ENCODE measurements at regions of chr11 and their contacts with region 1.

Region 1: GRCh38 chr11:44950625-44951476 is at the start of gene TP53I11:
- DNase-seq: peak; percentile 89 to 94 (median 91)
- ATAC-seq: peak; percentile 69 to 91 (median 83)
- H3K4me3 ChIP-seq: peak within 1 kb of the TSS; percentile 47 to 97 (median 88)
- H3K27ac ChIP-seq: peak within 1 kb of the TSS; percentile 63 to 91 (median 84)
- H3K4me1 ChIP-seq: peaks cover 0 to 68% (median 44%) of the 10 kb centered on the region in 12 donors
- H3K27me3 ChIP-seq: no peaks in the 10 kb centered on the region
- CTCF ChIP-seq: peak; percentile 61 to 96 (median 90)
- POLR2A ChIP-seq: peak in 1 of 2 donors; percentile 92
- total RNA-seq, gene TP53I11: 24.0 to 75.0 (median 39.4) TPM

Region 2: GRCh38 chr11:44842220-44842619 is 108.6 kb before region 1 on chr11:
- intact Hi-C with region 1: no loop called
- DNase-seq: no peak
- ATAC-seq: no peak
- H3K4me3 ChIP-seq: no peak overlapping the region
- H3K27ac ChIP-seq: no peak overlapping the region
- H3K4me1 ChIP-seq: peaks cover 0 to 11% (median 0%) of the 10 kb centered on the region in 12 donors
- H3K27me3 ChIP-seq: no peaks in the 10 kb centered on the region
- CTCF ChIP-seq: no peak
- POLR2A ChIP-seq: no peak

Region 3: GRCh38 chr11:45025716-45026492 is 75.1 kb after region 1 on chr11:
- intact Hi-C with region 1: loop called in 5 of 10 experiments (anchors 5 kb)
- DNase-seq: peak; percentile 66 to 88 (median 87)
- ATAC-seq: peak; percentile 64 to 93 (median 70)
- H3K4me3 ChIP-seq: no peak overlapping the region
- H3K27ac ChIP-seq: peak overlapping the region in 10 of 12 donors; percentile 16 to 85 (median 68)
- H3K4me1 ChIP-seq: peaks cover 10 to 66% (median 38%) of the 10 kb centered on the region in 12 donors
- H3K27me3 ChIP-seq: no peaks in the 10 kb centered on the region
- CTCF ChIP-seq: no peak
- POLR2A ChIP-seq: no peak

Region 4: GRCh38 chr11:45045683-45046471 is 95.0 kb after region 1 on chr11:
- intact Hi-C with region 1: loop called in 1 of 10 experiments (anchors 5 kb)
- DNase-seq: peak in 4 of 5 donors; percentile 55 to 70 (median 58)
- ATAC-seq: peak in 3 of 4 donors; percentile 58 to 63 (median 59)
- H3K4me3 ChIP-seq: peak overlapping the region in 1 of 12 donors; percentile 1
- H3K27ac ChIP-seq: peak overlapping the region in 11 of 12 donors; percentile 32 to 81 (median 63)
- H3K4me1 ChIP-seq: peaks cover 8 to 55% (median 43%) of the 10 kb centered on the region in 12 donors
- H3K27me3 ChIP-seq: no peaks in the 10 kb centered on the region
- CTCF ChIP-seq: peak in 1 of 12 donors; percentile 5
- POLR2A ChIP-seq: no peak

Region 5: DNA sequence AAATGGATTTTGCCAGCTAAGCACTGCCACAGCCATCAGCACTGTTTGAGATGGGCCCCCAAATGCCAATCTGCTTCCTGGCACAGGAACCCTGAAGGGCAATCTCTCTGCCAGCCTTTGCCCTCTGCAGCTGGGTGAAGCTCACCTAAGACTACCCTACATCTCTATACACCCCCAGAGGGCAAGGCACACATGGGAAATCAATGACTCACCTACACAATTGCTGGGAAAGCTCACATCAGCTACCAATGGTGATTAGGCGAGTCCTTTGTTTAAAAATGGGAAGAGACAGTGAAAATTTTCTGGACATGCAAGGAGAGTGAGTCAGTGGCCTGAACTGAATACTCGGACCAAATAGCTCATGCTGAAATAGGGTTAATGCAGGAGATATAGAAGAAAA is 183.0 kb after region 1 on chr11:
- intact Hi-C with region 1: no loop called
- DNase-seq: no peak
- ATAC-seq: no peak
- H3K4me3 ChIP-seq: no peak overlapping the region
- H3K27ac ChIP-seq: no peak overlapping the region
- H3K4me1 ChIP-seq: no peaks in the 10 kb centered on the region
- H3K27me3 ChIP-seq: peaks cover 0 to 39% (median 9%) of the 10 kb centered on the region in 9 donors
- CTCF ChIP-seq: no peak
- POLR2A ChIP-seq: no peak

Region 6: GRCh38 chr11:45209891-45210699 is 259.2 kb after region 1 on chr11:
- intact Hi-C with region 1: no loop called
- DNase-seq: peak; percentile 79 to 96 (median 91)
- ATAC-seq: peak; percentile 94 to 97 (median 96)
- H3K4me3 ChIP-seq: peak overlapping the region in 8 of 12 donors; percentile 5 to 40 (median 19)
- H3K27ac ChIP-seq: peak overlapping the region; percentile 64 to 94 (median 82)
- H3K4me1 ChIP-seq: peaks cover 14 to 75% (median 28%) of the 10 kb centered on the region in 12 donors
- H3K27me3 ChIP-seq: no peaks in the 10 kb centered on the region
- CTCF ChIP-seq: peak in 3 of 12 donors; percentile 8 to 27 (median 21)
- POLR2A ChIP-seq: peak in 1 of 2 donors; percentile 35

Region 7: GRCh38 chr11:45339729-45340519 is 389.1 kb after region 1 on chr11:
- intact Hi-C with region 1: loop called in 2 of 10 experiments (anchors 5 to 10 kb)
- DNase-seq: peak; percentile 91 to 96 (median 96)
- ATAC-seq: peak; percentile 85 to 96 (median 94)
- H3K4me3 ChIP-seq: peak overlapping the region in 9 of 12 donors; percentile 7 to 35 (median 18)
- H3K27ac ChIP-seq: peak overlapping the region in 4 of 12 donors; percentile 13 to 39 (median 24)
- H3K4me1 ChIP-seq: peaks cover 0 to 10% (median 4%) of the 10 kb centered on the region in 12 donors
- H3K27me3 ChIP-seq: peaks cover 0 to 9% (median 0%) of the 10 kb centered on the region in 9 donors
- CTCF ChIP-seq: peak; percentile 83 to 96 (median 94)
- POLR2A ChIP-seq: peak in 1 of 2 donors; percentile 14

Region 8: DNA sequence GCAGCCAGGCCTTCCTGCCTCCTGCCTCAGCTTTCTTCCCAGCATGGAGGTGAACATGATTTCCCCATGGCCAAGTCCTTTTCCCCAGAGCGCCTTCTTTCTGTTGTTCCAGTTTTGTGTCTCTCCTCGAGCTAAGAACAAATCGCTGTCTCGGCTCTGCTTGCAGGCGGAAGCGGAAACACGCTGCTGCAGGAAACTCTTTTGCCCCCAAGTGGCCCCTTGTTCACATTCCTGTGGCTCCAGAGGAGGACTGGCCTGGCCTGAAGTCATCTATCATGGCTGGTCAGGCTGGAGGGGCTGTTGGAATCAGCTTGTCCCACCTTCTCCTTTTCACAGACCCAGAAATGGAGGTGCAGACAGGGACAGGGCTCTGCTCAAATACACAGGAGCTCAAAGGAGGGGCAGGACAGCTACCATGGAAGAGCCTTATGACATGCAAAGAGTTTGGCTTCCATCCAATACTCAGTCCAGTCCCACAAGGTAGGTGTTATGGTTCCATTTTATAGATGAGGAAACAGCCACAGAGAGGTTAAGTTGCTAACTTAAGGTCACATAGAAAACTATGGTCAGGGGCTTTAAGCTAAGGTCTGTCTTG is 517.5 kb after region 1 on chr11:
- intact Hi-C with region 1: no loop called
- DNase-seq: no peak
- ATAC-seq: no peak
- H3K4me3 ChIP-seq: no peak overlapping the region
- H3K27ac ChIP-seq: no peak overlapping the region
- H3K4me1 ChIP-seq: peaks cover 0 to 5% (median 0%) of the 10 kb centered on the region in 12 donors
- H3K27me3 ChIP-seq: no peaks in the 10 kb centered on the region
- CTCF ChIP-seq: no peak
- POLR2A ChIP-seq: no peak

Measured in heart left ventricle (tissue), 16 donors.